ENCODE measurements at regions of chr6 and their contacts with region 1.

Region 1: GRCh38 chr6:78808356-78808891 is 58.9 kb upstream of the IRAK1BP1 start:
- DNase-seq: no peak
- H3K4me3 ChIP-seq: no peak overlapping the region
- H3K27ac ChIP-seq: no peak overlapping the region
- H3K27me3 ChIP-seq: no peaks in the 10 kb centered on the region
- CTCF ChIP-seq: no peak

Region 2: GRCh38 chr6:78580923-78581322 is 227.5 kb before region 1 on chr6:
- intact Hi-C with region 1: no loop called
- DNase-seq: no peak
- H3K4me3 ChIP-seq: no peak overlapping the region
- H3K27ac ChIP-seq: no peak overlapping the region
- H3K27me3 ChIP-seq: no peaks in the 10 kb centered on the region
- CTCF ChIP-seq: no peak

Region 3: GRCh38 chr6:78824045-78824444 is 15.6 kb after region 1 on chr6:
- intact Hi-C with region 1: loop called in 1 of 2 experiments (anchors 2 kb)
- DNase-seq: no peak
- H3K4me3 ChIP-seq: no peak overlapping the region
- H3K27ac ChIP-seq: no peak overlapping the region
- H3K27me3 ChIP-seq: no peaks in the 10 kb centered on the region
- CTCF ChIP-seq: no peak

Region 4: DNA sequence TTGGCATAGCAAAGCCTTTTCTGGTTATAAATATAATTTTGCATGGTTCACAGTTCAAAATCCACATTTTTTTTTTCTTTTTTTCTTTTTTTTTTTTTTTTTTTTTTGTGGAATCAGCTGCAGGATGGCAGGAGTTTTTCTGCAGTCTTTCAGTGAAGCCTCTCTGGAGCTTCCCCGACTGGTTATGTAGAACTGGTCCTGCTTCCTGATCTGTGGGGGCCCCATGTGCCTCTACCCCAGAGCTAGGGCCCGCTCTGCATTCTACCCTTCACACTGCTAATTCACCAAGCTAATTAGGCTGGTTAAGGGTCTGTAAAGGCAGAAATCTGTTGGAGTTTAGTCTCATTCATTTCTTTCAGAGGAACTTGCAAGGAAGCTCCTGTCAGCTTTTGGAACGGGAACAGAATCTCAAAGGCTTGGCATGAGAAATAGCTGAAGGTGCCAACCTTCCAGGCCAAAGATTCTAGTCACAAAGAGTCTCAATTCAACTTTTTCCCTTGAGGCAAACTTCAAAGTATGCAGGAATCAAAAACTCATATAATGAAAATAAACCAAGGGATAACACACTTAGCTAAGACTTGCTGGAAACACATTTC is 380.6 kb after region 1 on chr6:
- intact Hi-C with region 1: no loop called
- DNase-seq: no peak
- H3K4me3 ChIP-seq: no peak overlapping the region
- H3K27ac ChIP-seq: peak overlapping the region in 1 of 59 donors; percentile 20
- H3K27me3 ChIP-seq: no peaks in the 10 kb centered on the region
- CTCF ChIP-seq: no peak

Measured in dorsolateral prefrontal cortex (tissue), 120 donors.